ENCODE measurements at regions of chr3 and their contacts with region 1.

Region 1: DNA sequence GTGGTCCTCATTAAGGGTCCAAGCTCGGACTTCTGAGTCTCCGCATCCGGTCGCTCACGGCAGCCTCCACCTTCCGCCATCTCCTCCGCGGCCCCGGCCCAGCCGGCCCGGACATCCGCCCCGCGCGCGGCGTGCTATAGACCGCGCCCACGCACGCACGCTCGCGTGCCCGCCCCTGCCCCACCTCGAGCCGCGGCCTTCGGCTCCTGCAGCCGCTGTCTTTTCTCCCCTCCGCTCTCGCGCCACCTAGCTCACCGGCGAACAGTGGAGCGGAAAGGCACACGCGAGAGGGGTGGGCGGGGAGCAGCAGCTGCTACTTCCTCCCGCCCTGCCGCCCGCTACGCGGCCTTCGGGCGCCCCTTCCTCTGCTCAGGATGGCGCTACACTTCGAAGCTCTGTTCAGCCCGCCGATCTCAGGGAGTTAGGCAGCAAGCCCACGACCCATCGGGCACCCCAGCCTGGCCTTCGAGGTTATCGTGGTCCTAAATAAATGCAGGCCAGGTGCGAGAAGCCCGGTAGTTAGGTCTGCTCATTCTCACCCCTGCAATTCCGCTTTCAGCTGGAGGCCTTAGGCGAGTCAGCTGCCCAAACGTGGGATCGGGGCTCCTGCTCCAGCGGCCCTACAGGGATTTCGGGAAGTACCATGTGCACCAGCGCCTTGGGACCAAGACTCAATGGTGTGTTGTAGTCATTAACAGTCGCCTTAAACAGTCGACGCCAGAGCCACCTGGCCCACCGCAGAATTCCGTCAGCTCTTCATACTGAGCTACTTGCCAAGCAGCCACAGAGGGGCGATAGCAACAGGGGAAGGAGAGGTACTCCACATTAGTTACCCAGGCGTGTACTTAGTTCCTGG is at the start of gene USP4:
- DNase-seq: peak; percentile 87
- ATAC-seq: peak; percentile 92
- H3K4me3 ChIP-seq: peak within 1 kb of the TSS; percentile 89
- H3K27ac ChIP-seq: peak within 1 kb of the TSS; percentile 98
- H3K4me1 ChIP-seq: peaks cover 38% of the 10 kb centered on the region
- H3K27me3 ChIP-seq: no peaks in the 10 kb centered on the region
- CTCF ChIP-seq: peak; percentile 57 to 81 (median 77); a peak in 5 of 6 replicates
- EP300 ChIP-seq: peak; percentile 54 to 62; a peak in 2 of 4 replicates
- POLR2A ChIP-seq: peak; percentile 95
- RAD21 ChIP-seq: peak; percentile 73
- polyA plus RNA-seq, gene USP4: 40.3 to 49.3 TPM

Region 2: GRCh38 chr3:49021813-49022687 is 318.1 kb before region 1 on chr3 and contains the start of gene NDUFAF3:
- CTCF ChIA-PET with region 1: interaction called, 5 read pairs
- POLR2A ChIA-PET with region 1: no interaction called
- RAD21 ChIA-PET with region 1: interaction called, 3 read pairs
- SMC1A ChIA-PET with region 1: no interaction called
- in situ Hi-C with region 1: no loop called
- intact Hi-C with region 1: loop called (anchors 10 kb)
- DNase-seq: peak; percentile 74
- ATAC-seq: peak; percentile 81
- H3K4me3 ChIP-seq: peak within 1 kb of the TSS; percentile 95
- H3K27ac ChIP-seq: peak within 1 kb of the TSS; percentile 94
- H3K4me1 ChIP-seq: peaks cover 21% of the 10 kb centered on the region
- H3K27me3 ChIP-seq: no peaks in the 10 kb centered on the region
- CTCF ChIP-seq: peak; percentile 95 to 97 (median 95)
- EP300 ChIP-seq: peak in 1 of 2 experiments; percentile 25; a peak in 1 of 4 replicates
- POLR2A ChIP-seq: no peak
- RAD21 ChIP-seq: 0 out of 2 replicates have a peak, but pooled peaks have one; percentile 14
- polyA plus RNA-seq, gene NDUFAF3: 31.3 to 40.2 TPM

Region 3: GRCh38 chr3:49171119-49171774 is 168.9 kb before region 1 on chr3 and contains the start of gene KLHDC8B:
- CTCF ChIA-PET with region 1: interaction called, 20 read pairs
- POLR2A ChIA-PET with region 1: no interaction called
- RAD21 ChIA-PET with region 1: interaction called, 8 read pairs
- SMC1A ChIA-PET with region 1: no interaction called
- in situ Hi-C with region 1: no loop called
- intact Hi-C with region 1: no loop called
- DNase-seq: peak; percentile 12
- ATAC-seq: peak; percentile 90
- H3K4me3 ChIP-seq: peak within 1 kb of the TSS; percentile 74
- H3K27ac ChIP-seq: no peak within 1 kb of the TSS
- H3K4me1 ChIP-seq: peaks cover 5% of the 10 kb centered on the region
- H3K27me3 ChIP-seq: no peaks in the 10 kb centered on the region
- CTCF ChIP-seq: peak; percentile 93 to 96 (median 96)
- EP300 ChIP-seq: no peak
- POLR2A ChIP-seq: peak; percentile 53
- RAD21 ChIP-seq: peak; percentile 69
- polyA plus RNA-seq, gene KLHDC8B: 0.40 TPM in 1 of 2 experiments, not detected in the other

Region 4: DNA sequence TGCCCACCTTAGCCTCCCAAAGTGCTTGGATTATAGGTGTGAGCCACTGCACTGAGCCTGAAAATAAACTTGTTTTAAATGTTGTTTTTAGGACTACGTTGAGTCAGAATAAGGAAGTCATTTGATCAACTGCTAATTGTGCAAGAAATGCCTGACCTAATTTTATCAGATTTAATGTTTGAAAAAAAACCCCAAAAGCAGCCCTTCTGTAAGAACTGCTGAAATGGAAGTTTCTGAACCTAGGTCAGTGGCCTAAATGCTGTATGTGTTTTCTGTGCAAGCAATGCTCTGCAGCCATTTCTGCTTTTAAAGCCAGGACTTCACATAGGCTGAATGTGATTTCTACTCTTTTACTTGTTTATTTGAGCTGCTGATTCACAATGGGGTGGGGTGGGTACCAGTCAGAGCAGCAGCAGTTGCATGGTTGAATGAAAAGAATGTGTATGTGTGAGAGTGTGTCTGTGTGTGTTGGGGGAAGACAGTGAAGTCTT is 11.4 kb after region 1 on chr3:
- CTCF ChIA-PET with region 1: interaction called, 32 read pairs
- POLR2A ChIA-PET with region 1: interaction called, 10 read pairs
- RAD21 ChIA-PET with region 1: interaction called, 23 read pairs
- SMC1A ChIA-PET with region 1: interaction called, 34 read pairs
- in situ Hi-C with region 1: no loop called
- intact Hi-C with region 1: no loop called
- DNase-seq: no peak
- ATAC-seq: peak; percentile 45
- H3K4me3 ChIP-seq: no peak overlapping the region
- H3K27ac ChIP-seq: peak overlapping the region; percentile 38; the same call in 1 of the 2 replicates
- H3K4me1 ChIP-seq: peaks cover 27% of the 10 kb centered on the region
- H3K27me3 ChIP-seq: no peaks in the 10 kb centered on the region
- CTCF ChIP-seq: no peak
- EP300 ChIP-seq: no peak
- POLR2A ChIP-seq: no peak
- RAD21 ChIP-seq: no peak

Region 5: DNA sequence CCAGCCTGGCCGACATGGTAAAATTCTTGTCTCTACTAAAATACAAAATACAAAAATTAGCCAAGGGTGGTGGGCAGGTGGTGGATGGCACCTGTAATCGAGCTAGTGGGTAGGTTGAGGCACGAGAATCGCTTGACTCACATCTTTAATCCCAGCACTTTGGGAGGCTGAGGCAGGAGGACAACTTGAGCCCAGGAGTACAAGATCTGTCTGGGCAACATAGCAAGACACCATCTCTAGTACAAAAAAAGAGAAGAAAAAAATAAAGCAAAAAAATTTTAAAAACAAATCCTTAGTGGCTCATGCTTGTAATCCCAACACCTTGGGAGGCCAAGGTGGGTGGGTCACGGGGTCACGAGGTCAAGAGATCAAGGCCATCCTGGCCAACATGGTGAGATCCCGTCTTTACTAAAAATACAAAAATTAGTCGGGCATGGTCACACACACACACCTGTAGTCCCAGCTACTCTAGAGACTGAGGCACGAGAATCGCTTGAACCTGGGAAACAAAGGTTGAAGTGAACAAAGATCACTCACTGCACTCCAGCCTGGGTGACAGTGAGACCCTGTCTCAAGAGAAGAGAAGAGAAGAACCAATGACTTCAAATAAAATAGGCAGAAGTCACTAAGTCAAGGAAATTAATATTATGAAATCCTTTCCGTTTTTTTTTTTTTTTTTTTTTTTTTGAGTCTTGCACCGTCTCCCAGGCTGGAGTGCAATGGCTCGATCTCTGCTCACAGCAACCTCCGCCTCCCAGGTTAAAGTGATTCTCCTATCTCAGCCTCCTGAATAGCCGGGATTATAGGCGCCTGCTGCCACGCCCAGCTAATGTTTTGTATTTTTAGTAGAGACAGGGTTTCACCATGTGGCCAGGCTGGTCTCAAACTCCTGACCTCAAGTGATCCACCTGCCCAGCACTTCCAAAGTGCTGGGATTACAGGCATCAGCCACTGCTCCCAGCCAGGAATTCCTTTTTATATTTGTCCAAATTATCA is 66.7 kb after region 1 on chr3:
- CTCF ChIA-PET with region 1: interaction called, 18 read pairs
- POLR2A ChIA-PET with region 1: interaction called, 40 read pairs
- RAD21 ChIA-PET with region 1: interaction called, 14 read pairs
- SMC1A ChIA-PET with region 1: interaction called, 17 read pairs
- in situ Hi-C with region 1: no loop called
- intact Hi-C with region 1: loop called (anchors 1 kb)
- DNase-seq: no peak
- ATAC-seq: no peak
- H3K4me3 ChIP-seq: peak overlapping the region; percentile 29
- H3K27ac ChIP-seq: no peak overlapping the region
- H3K4me1 ChIP-seq: 0 out of 2 replicates have a peak, but pooled peaks cover 3% of the 10 kb centered on the region
- H3K27me3 ChIP-seq: no peaks in the 10 kb centered on the region
- CTCF ChIP-seq: no peak
- EP300 ChIP-seq: no peak
- POLR2A ChIP-seq: no peak
- RAD21 ChIP-seq: no peak

Region 6: DNA sequence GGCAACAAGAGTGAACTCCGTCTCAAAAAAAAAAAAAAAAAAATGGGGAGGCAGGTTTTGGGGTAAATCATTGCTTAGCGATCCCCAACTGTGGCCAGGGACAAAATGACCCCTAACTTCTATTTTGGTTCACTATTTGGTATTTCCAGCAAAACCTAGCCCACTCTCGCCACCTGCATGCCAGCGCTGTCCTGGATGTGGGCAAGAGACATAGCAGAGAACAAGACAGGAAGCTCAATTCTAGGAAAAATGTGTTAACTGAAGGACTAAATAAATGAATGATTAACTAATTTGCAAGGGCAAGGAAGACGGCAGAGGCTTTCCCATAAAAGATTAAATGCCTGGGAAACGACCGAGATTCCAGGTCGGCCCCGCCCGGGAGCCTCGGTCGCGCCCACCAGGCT is 88.5 kb after region 1 on chr3:
- CTCF ChIA-PET with region 1: interaction called, 14 read pairs
- POLR2A ChIA-PET with region 1: interaction called, 15 read pairs
- RAD21 ChIA-PET with region 1: interaction called, 21 read pairs
- SMC1A ChIA-PET with region 1: interaction called, 18 read pairs
- in situ Hi-C with region 1: no loop called
- intact Hi-C with region 1: no loop called
- DNase-seq: no peak
- ATAC-seq: peak; percentile 10
- H3K4me3 ChIP-seq: peak overlapping the region; percentile 59
- H3K27ac ChIP-seq: peak overlapping the region; percentile 84
- H3K4me1 ChIP-seq: no peaks in the 10 kb centered on the region; the same call in 1 of the 2 replicates
- H3K27me3 ChIP-seq: no peaks in the 10 kb centered on the region
- CTCF ChIP-seq: no peak
- EP300 ChIP-seq: no peak
- POLR2A ChIP-seq: no peak
- RAD21 ChIP-seq: 0 out of 2 replicates have a peak, but pooled peaks have one; percentile 3

Region 7: GRCh38 chr3:49454458-49454857 is 114.3 kb after region 1 on chr3:
- CTCF ChIA-PET with region 1: interaction called, 73 read pairs
- POLR2A ChIA-PET with region 1: interaction called, 7 read pairs
- RAD21 ChIA-PET with region 1: interaction called, 64 read pairs
- SMC1A ChIA-PET with region 1: interaction called, 25 read pairs
- in situ Hi-C with region 1: loop called (anchors 5 kb)
- intact Hi-C with region 1: loop called (anchors 1 kb)
- DNase-seq: no peak
- ATAC-seq: peak; percentile 73
- H3K4me3 ChIP-seq: no peak overlapping the region
- H3K27ac ChIP-seq: no peak overlapping the region
- H3K4me1 ChIP-seq: no peaks in the 10 kb centered on the region
- H3K27me3 ChIP-seq: no peaks in the 10 kb centered on the region
- CTCF ChIP-seq: peak; percentile 36 to 49 (median 43); a peak in 5 of 6 replicates
- EP300 ChIP-seq: no peak
- POLR2A ChIP-seq: no peak
- RAD21 ChIP-seq: peak; percentile 60

Measured in GM12878 (cell line).